ENCODE measurements at regions of chr2 and their contacts with region 1.

Region 1: DNA sequence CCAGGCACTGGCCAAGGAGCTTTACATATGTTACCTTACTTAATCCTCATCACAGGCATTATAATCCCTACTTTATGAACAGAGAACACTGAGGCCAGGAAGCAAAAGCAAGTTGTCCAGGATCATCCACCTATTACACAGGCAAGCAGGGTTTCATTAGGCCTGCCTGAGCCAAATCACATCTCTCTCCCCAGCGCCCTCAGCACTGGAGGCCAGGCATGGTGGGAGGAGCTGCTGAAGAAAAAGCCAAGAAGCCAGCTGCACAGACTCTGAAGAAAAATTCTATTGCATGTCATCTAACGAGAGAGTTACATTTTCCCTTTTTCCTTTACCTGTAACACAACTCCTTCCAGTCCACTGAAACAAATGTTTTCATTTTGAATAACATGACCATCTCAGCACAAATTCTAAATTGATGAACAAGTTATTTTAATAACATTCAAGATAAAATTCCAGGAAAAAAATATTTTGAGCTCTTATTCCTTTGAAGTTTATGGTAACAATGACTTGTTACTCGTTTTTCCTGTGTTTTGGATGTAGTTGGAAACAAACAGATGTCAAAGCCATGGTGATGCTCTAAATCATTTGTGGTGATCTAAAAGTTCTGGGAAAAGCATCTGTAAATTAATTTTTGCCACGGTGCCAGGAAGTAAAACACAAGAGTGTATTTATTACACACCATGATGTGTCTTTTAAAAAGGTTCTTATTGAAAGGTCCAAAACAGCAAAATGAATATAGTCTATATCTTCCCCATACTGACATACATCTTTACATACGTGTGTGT is 139.0 kb upstream of the ITGB6 start:
- H3K4me3 Mint-ChIP-seq: no peak overlapping the region
- H3K27ac Mint-ChIP-seq: no peak overlapping the region
- H3K4me1 Mint-ChIP-seq: peaks cover 28% of the 10 kb centered on the region
- H3K27me3 Mint-ChIP-seq: no peaks in the 10 kb centered on the region

Region 2: GRCh38 chr2:160039166-160039903 is 299.8 kb before region 1 on chr2:
- intact Hi-C with region 1: no loop called
- H3K4me3 Mint-ChIP-seq: no peak overlapping the region
- H3K27ac Mint-ChIP-seq: no peak overlapping the region
- H3K4me1 Mint-ChIP-seq: no peaks in the 10 kb centered on the region
- H3K27me3 Mint-ChIP-seq: no peaks in the 10 kb centered on the region

Region 3: GRCh38 chr2:160402997-160403979 is 64.2 kb after region 1 on chr2:
- intact Hi-C with region 1: loop called (anchors 5 kb)
- H3K4me3 Mint-ChIP-seq: peak overlapping the region; percentile 13
- H3K27ac Mint-ChIP-seq: peak overlapping the region; percentile 69
- H3K4me1 Mint-ChIP-seq: peaks cover 46% of the 10 kb centered on the region
- H3K27me3 Mint-ChIP-seq: no peaks in the 10 kb centered on the region

Region 4: GRCh38 chr2:160918906-160919503 is 579.9 kb after region 1 on chr2:
- intact Hi-C with region 1: loop called (anchors 5 kb)
- H3K4me3 Mint-ChIP-seq: no peak overlapping the region
- H3K27ac Mint-ChIP-seq: no peak overlapping the region
- H3K4me1 Mint-ChIP-seq: peaks cover 12% of the 10 kb centered on the region
- H3K27me3 Mint-ChIP-seq: no peaks in the 10 kb centered on the region

Region 5: GRCh38 chr2:160928854-160929620 is 589.9 kb after region 1 on chr2:
- intact Hi-C with region 1: no loop called
- H3K4me3 Mint-ChIP-seq: no peak overlapping the region
- H3K27ac Mint-ChIP-seq: no peak overlapping the region
- H3K4me1 Mint-ChIP-seq: peaks cover 7% of the 10 kb centered on the region
- H3K27me3 Mint-ChIP-seq: no peaks in the 10 kb centered on the region

Measured in dendritic cell treated with granulocyte-macrophage colony-stimulating factor and Interleukin-4, amounts not matched to agents 40 ng/mL and 50 ng/mL, for 4 days (primary cell).